Activated T-helper 1 cell treated with anti-CD3 and anti-CD28 coated beads, Interleukin-12 subunit alpha, Interleukin-12 subunit beta, Interleukin-2, Interleukin-4 antibody, amounts not matched to agents 30 ng/mL and 10 ng/mL and 1 ng/mL, durations not matched to agents 14 hours and 24 hours and 36 hours (primary cell): ENCODE measurements at regions of chr6 and their contacts with region 1.

Region 1: DNA sequence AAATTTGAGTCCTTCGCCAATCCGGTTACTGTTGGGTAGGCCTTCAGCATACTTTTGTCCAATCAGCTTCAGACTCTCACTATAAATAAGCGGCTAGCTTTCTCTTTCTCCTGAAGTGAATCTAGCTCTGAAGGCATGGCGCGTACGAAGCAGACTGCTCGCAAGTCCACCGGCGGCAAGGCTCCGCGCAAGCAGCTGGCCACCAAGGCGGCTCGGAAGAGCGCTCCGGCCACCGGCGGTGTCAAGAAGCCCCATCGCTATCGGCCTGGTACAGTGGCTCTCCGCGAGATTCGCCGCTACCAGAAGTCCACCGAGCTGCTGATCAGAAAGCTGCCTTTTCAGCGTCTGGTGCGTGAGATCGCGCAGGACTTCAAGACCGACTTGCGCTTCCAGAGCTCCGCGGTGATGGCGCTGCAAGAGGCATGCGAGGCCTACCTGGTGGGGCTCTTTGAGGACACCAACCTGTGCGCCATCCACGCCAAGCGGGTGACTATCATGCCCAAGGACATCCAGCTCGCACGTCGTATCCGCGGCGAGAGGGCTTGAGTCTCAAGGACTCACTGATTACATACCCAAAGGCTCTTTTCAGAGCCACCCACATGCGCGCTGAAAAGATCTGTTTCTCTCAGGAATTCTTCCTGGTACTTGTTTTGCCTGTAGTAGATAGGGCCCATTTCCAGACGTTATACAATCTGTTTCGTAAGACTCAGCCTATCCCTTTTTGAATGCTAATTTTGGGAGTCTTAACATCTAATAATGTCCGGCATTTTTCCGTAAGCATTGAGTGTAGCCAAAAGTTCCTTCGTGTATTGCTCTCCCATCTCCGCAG is 102.0 kb downstream of the OR2B2 start:
- DNase-seq: peak; percentile 83
- H3K4me3 Mint-ChIP-seq: peak overlapping the region; percentile 91
- H3K27ac Mint-ChIP-seq: peak overlapping the region; percentile 96
- H3K4me1 Mint-ChIP-seq: peaks cover 78% of the 10 kb centered on the region
- H3K27me3 Mint-ChIP-seq: no peaks in the 10 kb centered on the region

Region 2: DNA sequence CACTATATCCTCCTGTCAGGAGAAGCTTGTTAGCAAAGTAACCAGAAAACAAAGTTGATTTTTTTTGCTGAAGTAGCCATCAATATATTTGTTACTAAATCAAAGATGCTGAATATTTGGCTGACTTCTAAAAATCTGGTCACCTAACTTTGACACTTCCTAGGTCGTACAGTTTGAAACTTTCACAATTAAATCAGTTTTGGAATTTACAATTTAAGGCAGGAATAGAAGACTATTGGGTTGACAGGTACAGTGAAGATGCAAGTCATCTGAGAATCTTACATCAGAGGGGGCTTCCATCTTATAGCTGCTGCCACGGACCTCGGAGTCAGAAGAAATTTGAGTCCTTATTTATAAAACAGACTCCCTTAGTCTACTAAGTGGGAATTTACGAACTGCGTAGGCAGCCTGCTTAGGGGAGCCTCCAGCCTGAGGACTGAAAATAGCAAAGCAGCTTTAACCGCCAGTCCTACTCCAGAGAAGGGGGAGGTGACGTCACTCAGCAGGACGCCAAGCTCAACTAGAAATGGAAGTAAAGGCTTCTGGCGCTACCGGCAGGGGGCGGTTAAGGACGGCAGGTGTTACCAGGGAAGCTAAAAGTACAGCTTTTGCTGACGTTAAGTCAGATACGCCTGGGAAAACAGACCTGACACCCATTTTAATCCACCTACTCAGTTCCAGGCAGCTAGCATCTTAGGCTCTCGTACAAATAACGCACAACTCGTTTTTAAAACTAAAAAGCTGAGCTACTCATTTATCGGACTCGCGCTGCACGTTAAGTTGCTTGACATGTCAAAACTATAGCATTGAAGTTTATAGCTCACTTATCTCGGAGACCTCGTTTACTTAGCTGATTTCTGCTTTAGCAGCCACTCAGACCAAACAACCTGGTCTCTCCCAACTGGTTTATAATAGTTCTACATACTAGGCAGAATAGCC is 1784.0 kb before region 1 on chr6:
- intact Hi-C with region 1: loop called (anchors 2 kb)
- DNase-seq: peak; percentile 88
- H3K4me3 Mint-ChIP-seq: peak overlapping the region; percentile 85
- H3K27ac Mint-ChIP-seq: peak overlapping the region; percentile 96
- H3K4me1 Mint-ChIP-seq: peaks cover 93% of the 10 kb centered on the region
- H3K27me3 Mint-ChIP-seq: no peaks in the 10 kb centered on the region

Region 3: DNA sequence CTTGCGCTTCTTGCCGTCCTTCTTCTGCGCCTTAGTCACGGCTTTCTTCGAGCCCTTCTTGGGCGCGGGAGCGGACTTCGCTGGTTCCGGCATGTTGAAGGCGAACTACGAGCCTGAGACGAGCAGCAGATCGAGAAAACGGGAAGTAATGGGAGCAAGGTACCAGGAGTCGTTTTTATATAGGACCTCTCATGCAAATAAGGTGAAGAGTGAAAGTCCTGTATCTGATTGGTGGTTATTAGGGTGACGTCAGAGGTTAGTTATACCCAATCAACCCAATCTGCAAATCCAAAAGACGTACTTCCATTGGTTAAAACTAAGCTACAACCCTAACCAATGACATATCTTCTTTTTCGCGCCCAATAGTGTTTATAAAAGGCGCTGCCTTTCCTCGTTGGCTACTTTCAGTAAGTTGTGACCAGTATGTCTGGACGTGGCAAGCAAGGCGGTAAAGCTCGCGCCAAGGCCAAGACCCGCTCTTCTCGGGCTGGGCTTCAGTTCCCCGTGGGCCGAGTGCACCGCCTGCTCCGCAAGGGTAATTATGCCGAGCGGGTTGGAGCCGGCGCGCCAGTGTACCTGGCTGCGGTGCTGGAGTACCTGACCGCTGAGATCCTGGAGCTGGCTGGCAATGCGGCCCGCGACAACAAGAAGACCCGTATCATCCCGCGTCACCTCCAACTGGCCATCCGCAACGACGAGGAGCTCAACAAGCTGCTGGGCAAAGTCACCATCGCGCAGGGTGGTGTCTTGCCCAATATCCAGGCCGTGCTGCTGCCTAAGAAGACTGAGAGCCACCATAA is 663.2 kb before region 1 on chr6:
- intact Hi-C with region 1: loop called (anchors 1 kb)
- DNase-seq: peak; percentile 82
- H3K4me3 Mint-ChIP-seq: no peak overlapping the region
- H3K27ac Mint-ChIP-seq: no peak overlapping the region
- H3K4me1 Mint-ChIP-seq: peaks cover 17% of the 10 kb centered on the region
- H3K27me3 Mint-ChIP-seq: no peaks in the 10 kb centered on the region

Region 4: DNA sequence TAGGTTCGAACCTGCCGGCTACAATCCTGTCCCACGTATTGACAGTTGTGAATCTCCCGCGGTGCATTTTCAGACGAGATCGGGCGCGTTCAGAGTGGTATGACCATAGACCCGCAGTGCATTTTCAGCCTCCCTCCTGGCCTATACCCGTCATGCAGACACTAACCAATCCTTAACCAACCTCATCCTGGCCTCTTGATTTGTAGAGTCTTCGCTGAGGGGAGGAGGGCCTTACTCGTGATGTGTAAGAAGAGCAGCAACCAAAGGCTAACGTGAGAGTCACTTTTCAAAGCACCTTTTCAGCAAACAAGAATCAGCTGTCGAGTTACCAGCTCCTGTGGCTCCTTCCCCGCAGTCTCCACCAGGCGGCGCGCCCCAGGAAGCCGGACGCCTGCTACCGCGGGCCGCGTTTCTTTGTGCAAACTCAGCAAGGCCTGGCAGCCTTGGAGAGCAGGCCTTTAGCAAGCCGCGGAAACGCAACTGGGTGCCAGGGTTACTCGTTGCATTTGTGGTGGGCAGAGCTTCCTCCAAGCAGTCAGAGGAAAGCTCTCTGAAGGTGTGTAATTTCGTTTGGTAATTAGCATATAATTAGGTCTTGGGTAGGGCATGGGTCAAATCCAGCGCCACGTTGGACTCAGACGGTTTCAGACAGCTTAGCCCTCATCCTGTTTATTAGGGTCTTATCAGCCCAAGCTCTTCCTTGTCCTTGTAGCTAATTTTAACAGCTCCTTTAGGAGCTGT is 37.7 kb before region 1 on chr6:
- intact Hi-C with region 1: loop called (anchors 1 kb)
- DNase-seq: peak; percentile 82
- H3K4me3 Mint-ChIP-seq: no peak overlapping the region
- H3K27ac Mint-ChIP-seq: peak overlapping the region; percentile 56
- H3K4me1 Mint-ChIP-seq: peaks cover 19% of the 10 kb centered on the region
- H3K27me3 Mint-ChIP-seq: peaks cover 22% of the 10 kb centered on the region

Region 5: DNA sequence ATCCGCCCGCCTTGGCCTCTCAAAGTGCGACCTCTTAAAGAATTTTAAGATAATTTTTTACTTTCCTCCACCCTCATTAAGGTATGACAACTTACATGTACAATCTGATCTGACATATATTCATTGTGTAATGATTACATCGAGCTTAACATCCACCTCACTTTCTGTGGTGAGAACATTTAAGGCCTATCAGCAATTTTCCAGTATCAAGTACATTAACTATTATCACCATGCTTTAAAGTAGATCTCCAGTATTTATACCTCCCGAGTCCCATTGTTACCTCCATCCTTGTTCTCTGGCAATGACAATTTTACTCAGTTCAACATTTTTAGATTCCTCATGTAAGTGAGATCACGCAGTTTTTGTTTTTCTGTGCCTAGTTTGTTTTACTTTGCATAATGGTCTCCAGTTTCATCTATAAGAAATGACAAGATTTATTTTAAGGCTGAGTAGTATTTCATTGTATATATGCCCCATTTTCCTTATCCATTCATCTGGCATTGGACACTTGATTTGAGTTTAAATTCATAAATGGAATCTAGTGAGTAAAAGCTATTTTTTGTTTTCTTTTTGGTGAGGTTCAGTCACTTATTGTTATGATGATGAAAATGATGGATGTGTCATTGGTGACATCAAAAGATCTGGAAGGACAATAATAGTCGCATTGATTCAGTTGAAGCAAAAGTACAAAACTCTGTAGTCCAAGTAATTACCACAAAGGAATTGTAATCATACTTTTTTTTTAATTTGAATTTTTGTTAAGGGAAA is 15.1 kb after region 1 on chr6:
- intact Hi-C with region 1: loop called (anchors 1 kb)
- DNase-seq: no peak
- H3K4me3 Mint-ChIP-seq: peak overlapping the region; percentile 89
- H3K27ac Mint-ChIP-seq: peak overlapping the region; percentile 96
- H3K4me1 Mint-ChIP-seq: peaks cover 46% of the 10 kb centered on the region
- H3K27me3 Mint-ChIP-seq: peaks cover 3% of the 10 kb centered on the region

Region 6: GRCh38 chr6:27871924-27872638 is 61.9 kb after region 1 on chr6:
- intact Hi-C with region 1: loop called (anchors 1 kb)
- DNase-seq: peak; percentile 87
- H3K4me3 Mint-ChIP-seq: peak overlapping the region; percentile 88
- H3K27ac Mint-ChIP-seq: peak overlapping the region; percentile 96
- H3K4me1 Mint-ChIP-seq: peaks cover 63% of the 10 kb centered on the region
- H3K27me3 Mint-ChIP-seq: no peaks in the 10 kb centered on the region